CD8-positive, alpha-beta T cell (primary cell): ENCODE measurements at regions of chr9 and their contacts with region 1.

Region 1: DNA sequence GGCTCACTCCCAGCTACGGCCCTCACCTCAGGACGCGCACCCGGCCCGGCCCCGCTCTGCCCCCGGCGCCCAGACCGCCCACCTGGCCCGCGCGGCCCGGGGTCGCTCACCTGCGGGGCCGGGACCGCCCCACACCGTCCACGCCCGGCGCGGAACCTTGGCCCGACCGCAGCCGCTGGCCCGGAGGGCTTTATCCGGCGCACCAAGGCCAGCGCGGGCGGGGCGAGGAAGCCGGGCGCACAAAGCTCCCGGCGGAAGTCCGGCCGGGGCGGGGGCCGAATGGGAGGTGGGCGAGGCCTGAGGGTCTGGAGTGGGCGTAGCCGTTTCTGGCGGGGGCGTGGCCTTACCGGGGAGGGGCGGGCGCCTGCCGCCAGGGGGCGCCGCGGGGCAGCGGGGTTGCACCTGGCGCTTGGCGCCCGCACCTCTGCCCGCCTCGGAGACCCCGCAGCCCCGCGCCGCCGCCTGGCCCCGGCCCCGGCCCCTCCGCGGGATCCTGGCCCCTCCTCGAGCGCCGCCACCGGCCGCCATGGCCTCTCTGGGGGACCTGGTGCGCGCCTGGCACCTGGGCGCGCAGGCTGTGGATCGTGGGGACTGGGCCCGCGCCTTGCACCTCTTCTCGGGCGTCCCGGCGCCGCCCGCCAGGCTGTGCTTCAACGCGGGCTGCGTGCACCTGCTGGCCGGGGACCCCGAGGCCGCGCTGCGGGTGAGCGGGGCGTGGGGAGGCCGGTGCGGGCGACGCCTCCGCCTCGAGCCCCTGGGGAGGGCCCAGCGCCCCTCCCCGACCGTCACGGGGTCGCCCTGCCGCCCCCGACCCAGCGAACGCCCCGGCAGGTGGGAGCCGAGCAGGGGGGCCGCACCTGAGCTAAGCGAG is at the starts of genes EXD3 and NOXA1:
- DNase-seq: peak; percentile 91 to 98 (median 94)
- ATAC-seq: peak; percentile 93
- H3K4me3 ChIP-seq: peak within 1 kb of the TSS; percentile 60 to 72
- H3K4me3 Mint-ChIP-seq: peak within 1 kb of the TSS; percentile 83
- H3K27ac ChIP-seq: peak within 1 kb of the TSS in 1 of 2 experiments; percentile 50
- H3K27ac Mint-ChIP-seq: no peak within 1 kb of the TSS
- H3K4me1 ChIP-seq: peaks cover 17% of the 10 kb centered on the region
- H3K4me1 Mint-ChIP-seq: peaks cover 20% of the 10 kb centered on the region
- H3K27me3 ChIP-seq: no peaks in the 10 kb centered on the region
- H3K27me3 Mint-ChIP-seq: no peaks in the 10 kb centered on the region
- CTCF ChIP-seq: peak; percentile 46
- total RNA-seq, gene EXD3: 9.1 to 11.0 TPM
- total RNA-seq, gene NOXA1: 2.4 to 2.7 TPM

Region 2: GRCh38 chr9:136865735-136866103 is 557.5 kb before region 1 on chr9:
- CTCF ChIA-PET with region 1: no interaction called
- POLR2A ChIA-PET with region 1: no interaction called
- intact Hi-C with region 1: no loop called
- DNase-seq: peak in 1 of 9 experiments; percentile 29
- ATAC-seq: peak; percentile 16
- H3K4me3 ChIP-seq: peak overlapping the region; percentile 64 to 78
- H3K4me3 Mint-ChIP-seq: peak overlapping the region; percentile 87
- H3K27ac ChIP-seq: peak overlapping the region; percentile 59 to 80
- H3K27ac Mint-ChIP-seq: peak overlapping the region; percentile 66
- H3K4me1 ChIP-seq: peaks cover 16% of the 10 kb centered on the region
- H3K4me1 Mint-ChIP-seq: peaks cover 23% of the 10 kb centered on the region
- H3K27me3 ChIP-seq: no peaks in the 10 kb centered on the region
- H3K27me3 Mint-ChIP-seq: no peaks in the 10 kb centered on the region
- CTCF ChIP-seq: no peak

Region 3: GRCh38 chr9:137445275-137445807 is 22.1 kb after region 1 on chr9:
- CTCF ChIA-PET with region 1: interaction called, 7 read pairs
- POLR2A ChIA-PET with region 1: interaction called, 3 read pairs
- intact Hi-C with region 1: loop called (anchors 1 kb)
- DNase-seq: peak; percentile 70 to 90 (median 86)
- ATAC-seq: peak; percentile 85
- H3K4me3 ChIP-seq: no peak overlapping the region
- H3K4me3 Mint-ChIP-seq: no peak overlapping the region
- H3K27ac ChIP-seq: no peak overlapping the region
- H3K27ac Mint-ChIP-seq: no peak overlapping the region
- H3K4me1 ChIP-seq: peaks cover 17% of the 10 kb centered on the region
- H3K4me1 Mint-ChIP-seq: peaks cover 22% of the 10 kb centered on the region
- H3K27me3 ChIP-seq: peaks cover 6 to 13% of the 10 kb centered on the region in 2 experiments
- H3K27me3 Mint-ChIP-seq: peaks cover 16% of the 10 kb centered on the region
- CTCF ChIP-seq: peak; percentile 69

Region 4: GRCh38 chr9:137453643-137454081 is 30.4 kb after region 1 on chr9:
- CTCF ChIA-PET with region 1: no interaction called
- POLR2A ChIA-PET with region 1: interaction called, 5 read pairs
- intact Hi-C with region 1: loop called in 1 of 2 experiments (anchors 1 kb)
- DNase-seq: peak in 7 of 9 experiments; percentile 1 to 67 (median 56)
- ATAC-seq: peak; percentile 63
- H3K4me3 ChIP-seq: no peak overlapping the region
- H3K4me3 Mint-ChIP-seq: no peak overlapping the region
- H3K27ac ChIP-seq: no peak overlapping the region
- H3K27ac Mint-ChIP-seq: peak overlapping the region; percentile 18
- H3K4me1 ChIP-seq: peaks cover 57% of the 10 kb centered on the region
- H3K4me1 Mint-ChIP-seq: peaks cover 37% of the 10 kb centered on the region
- H3K27me3 ChIP-seq: no peaks in the 10 kb centered on the region
- H3K27me3 Mint-ChIP-seq: no peaks in the 10 kb centered on the region
- CTCF ChIP-seq: no peak

Region 5: GRCh38 chr9:137459147-137459600 is 35.9 kb after region 1 on chr9 and contains the start of gene NSMF:
- CTCF ChIA-PET with region 1: no interaction called
- POLR2A ChIA-PET with region 1: interaction called, 5 read pairs
- intact Hi-C with region 1: loop called (anchors 1 to 2 kb)
- DNase-seq: peak in 8 of 9 experiments; percentile 87 to 97 (median 92)
- ATAC-seq: peak; percentile 71
- H3K4me3 ChIP-seq: peak within 1 kb of the TSS; percentile 49 to 54
- H3K4me3 Mint-ChIP-seq: peak within 1 kb of the TSS; percentile 69
- H3K27ac ChIP-seq: peak within 1 kb of the TSS; percentile 71 to 80
- H3K27ac Mint-ChIP-seq: peak within 1 kb of the TSS; percentile 79
- H3K4me1 ChIP-seq: peaks cover 72% of the 10 kb centered on the region
- H3K4me1 Mint-ChIP-seq: peaks cover 44% of the 10 kb centered on the region
- H3K27me3 ChIP-seq: no peaks in the 10 kb centered on the region
- H3K27me3 Mint-ChIP-seq: no peaks in the 10 kb centered on the region
- CTCF ChIP-seq: no peak
- total RNA-seq, gene NSMF: 82.8 to 87.2 TPM

Region 6: DNA sequence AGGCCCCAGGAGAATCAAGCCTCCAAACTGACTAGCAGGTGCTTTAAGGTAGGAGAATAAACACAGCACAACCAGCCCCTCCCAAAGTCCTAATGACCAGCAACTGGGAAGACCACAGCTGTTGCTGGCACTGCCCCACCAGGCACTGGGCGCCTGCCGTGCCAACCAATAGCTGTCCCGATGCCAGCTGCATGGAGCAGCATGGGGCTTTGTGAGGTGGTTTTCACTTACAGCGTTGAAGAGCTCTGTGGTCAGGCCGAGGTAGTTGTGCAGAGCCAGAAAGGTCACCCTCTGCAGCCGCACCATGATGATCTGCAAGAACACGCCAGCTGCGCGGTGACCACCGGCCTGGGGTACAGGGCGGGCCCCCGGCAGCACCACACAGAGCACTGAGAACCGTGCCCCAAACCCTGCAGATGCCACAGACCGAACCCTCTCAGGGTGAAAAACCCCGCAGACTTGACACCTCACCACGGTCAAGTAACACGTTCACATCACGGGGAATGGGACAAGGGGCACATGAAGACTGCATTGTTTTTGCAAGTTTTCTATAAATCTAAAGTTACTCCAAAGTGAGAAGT is 98.3 kb after region 1 on chr9:
- CTCF ChIA-PET with region 1: interaction called, 4 read pairs
- POLR2A ChIA-PET with region 1: no interaction called
- intact Hi-C with region 1: loop called in 1 of 2 experiments (anchors 1 kb)
- DNase-seq: no peak
- ATAC-seq: no peak
- H3K4me3 ChIP-seq: no peak overlapping the region
- H3K4me3 Mint-ChIP-seq: no peak overlapping the region
- H3K27ac ChIP-seq: no peak overlapping the region
- H3K27ac Mint-ChIP-seq: no peak overlapping the region
- H3K4me1 ChIP-seq: no peaks in the 10 kb centered on the region
- H3K4me1 Mint-ChIP-seq: no peaks in the 10 kb centered on the region
- H3K27me3 ChIP-seq: no peaks in the 10 kb centered on the region
- H3K27me3 Mint-ChIP-seq: no peaks in the 10 kb centered on the region
- CTCF ChIP-seq: no peak